ENCODE measurements at regions of chr5 and their contacts with region 1.

Region 1: DNA sequence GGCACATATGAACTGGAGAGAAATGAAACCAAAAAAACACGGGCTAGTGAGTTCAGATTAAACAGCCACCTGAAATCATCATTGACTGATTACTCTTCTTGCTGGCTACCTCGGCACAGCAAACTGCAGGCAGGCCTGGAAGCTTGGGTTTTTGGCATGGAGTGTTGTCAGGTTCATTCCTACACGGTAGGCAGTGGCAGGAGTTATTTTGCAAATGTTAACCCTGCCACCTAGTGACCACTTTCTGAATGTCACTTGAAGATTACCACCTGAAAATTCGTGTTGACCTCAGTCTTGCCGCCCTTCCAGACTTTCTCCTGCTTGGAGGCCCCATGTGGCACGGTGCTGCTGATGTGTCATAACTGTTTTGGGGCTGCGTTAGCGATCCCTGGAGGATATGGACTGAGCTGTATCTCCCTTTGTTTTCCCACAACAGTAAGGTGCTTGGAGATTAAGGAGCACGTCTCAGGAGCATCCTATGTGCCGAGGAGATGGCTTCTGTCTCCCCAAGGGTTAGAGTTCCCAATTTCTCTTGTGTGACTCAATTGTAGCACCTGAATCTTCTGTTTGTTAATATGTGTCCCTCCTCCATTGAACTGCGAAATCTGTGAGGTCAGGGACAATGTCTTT is 12.7 kb upstream of the CD180 start:
- DNase-seq: peak; percentile 61
- ATAC-seq: peak; percentile 94
- H3K4me3 ChIP-seq: no peak overlapping the region
- H3K27ac ChIP-seq: no peak overlapping the region
- H3K4me1 ChIP-seq: peaks cover 5% of the 10 kb centered on the region; the same call in 1 of the 2 replicates
- H3K27me3 ChIP-seq: no peaks in the 10 kb centered on the region
- CTCF ChIP-seq: peak; percentile 91
- EP300 ChIP-seq: no peak
- POLR2A ChIP-seq: no peak
- RAD21 ChIP-seq: peak; percentile 76

Region 2: DNA sequence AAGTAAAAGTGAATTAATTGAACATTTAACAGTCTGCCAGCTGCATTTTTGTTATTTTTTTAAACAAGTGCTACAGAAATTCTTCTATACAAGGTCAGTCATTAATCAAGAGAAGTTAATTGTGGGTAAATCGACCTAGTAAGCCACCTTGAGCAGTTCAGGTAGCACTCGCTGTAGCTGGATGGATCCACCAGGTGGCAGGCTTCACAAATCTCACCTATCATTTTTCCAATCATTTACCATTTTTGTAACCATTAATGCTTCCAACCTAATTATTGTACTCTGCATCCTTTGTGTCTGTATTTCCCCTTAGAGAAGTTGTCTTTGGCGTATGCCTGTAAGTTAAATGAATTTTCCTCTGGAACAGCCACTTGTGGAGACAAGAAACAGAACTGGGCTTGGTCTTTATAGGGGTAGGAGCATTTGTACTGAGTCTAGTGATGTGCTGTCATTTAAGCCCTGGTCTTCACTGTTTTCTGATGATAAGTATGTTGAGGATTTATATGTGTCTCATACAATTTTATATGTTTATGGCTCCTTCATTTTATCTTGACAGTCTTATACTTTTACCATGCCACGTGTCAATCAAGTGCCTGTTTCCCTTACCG is 52.2 kb before region 1 on chr5:
- CTCF ChIA-PET with region 1: interaction called, 13 read pairs
- POLR2A ChIA-PET with region 1: no interaction called
- in situ Hi-C with region 1: loop called (anchors 5 kb)
- intact Hi-C with region 1: loop called (anchors 1 kb)
- DNase-seq: peak; percentile 22
- ATAC-seq: peak; percentile 71
- H3K4me3 ChIP-seq: no peak overlapping the region
- H3K27ac ChIP-seq: no peak overlapping the region
- H3K4me1 ChIP-seq: peaks cover 8% of the 10 kb centered on the region
- H3K27me3 ChIP-seq: no peaks in the 10 kb centered on the region
- CTCF ChIP-seq: peak; percentile 61
- EP300 ChIP-seq: no peak
- POLR2A ChIP-seq: no peak
- RAD21 ChIP-seq: no peak